HepG2 (cell line): ENCODE measurements at regions of chr16 and their contacts with region 1.

Region 1: GRCh38 chr16:4371357-4372000 is at the start of gene VASN:
- DNase-seq: peak; percentile 59
- ATAC-seq: peak; percentile 34
- H3K4me3 ChIP-seq: peak within 1 kb of the TSS; percentile 76 to 92 (median 82)
- H3K27ac ChIP-seq: peak within 1 kb of the TSS; percentile 83
- H3K4me1 ChIP-seq: peaks cover 88% of the 10 kb centered on the region
- H3K27me3 ChIP-seq: no peaks in the 10 kb centered on the region
- CTCF ChIP-seq: no peak
- EP300 ChIP-seq: 0 out of 4 replicates have a peak, but pooled peaks of 1 of the 2 experiments have one; percentile 28
- POLR2A ChIP-seq: peak; percentile 97 to 99
- RAD21 ChIP-seq: peak; percentile 15; the same call in 1 of the 2 replicates
- total RNA-seq, gene VASN: 6.9 and 18.2 TPM in 2 replicates

Region 2: GRCh38 chr16:4330277-4330874 is 41.1 kb before region 1 on chr16:
- CTCF ChIA-PET with region 1: no interaction called
- POLR2A ChIA-PET with region 1: no interaction called
- in situ Hi-C with region 1: no loop called
- intact Hi-C with region 1: no loop called
- DNase-seq: peak; percentile 51
- ATAC-seq: peak; percentile 67
- H3K4me3 ChIP-seq: no peak overlapping the region
- H3K27ac ChIP-seq: no peak overlapping the region
- H3K4me1 ChIP-seq: peaks cover 31% of the 10 kb centered on the region
- H3K27me3 ChIP-seq: no peaks in the 10 kb centered on the region
- CTCF ChIP-seq: peak; percentile 94
- EP300 ChIP-seq: no peak
- POLR2A ChIP-seq: no peak
- RAD21 ChIP-seq: peak; percentile 93

Region 3: GRCh38 chr16:4344983-4345835 is 26.3 kb before region 1 on chr16:
- CTCF ChIA-PET with region 1: no interaction called
- POLR2A ChIA-PET with region 1: interaction called, 36 read pairs
- in situ Hi-C with region 1: no loop called
- intact Hi-C with region 1: no loop called
- DNase-seq: peak; percentile 87
- ATAC-seq: peak; percentile 67
- H3K4me3 ChIP-seq: peak overlapping the region; percentile 39 to 74 (median 46)
- H3K27ac ChIP-seq: peak overlapping the region; percentile 88
- H3K4me1 ChIP-seq: peaks cover 57% of the 10 kb centered on the region
- H3K27me3 ChIP-seq: no peaks in the 10 kb centered on the region
- CTCF ChIP-seq: no peak
- EP300 ChIP-seq: no peak
- POLR2A ChIP-seq: peak in 1 of 2 experiments; percentile 62; a peak in 2 of 4 replicates
- RAD21 ChIP-seq: no peak

Region 4: DNA sequence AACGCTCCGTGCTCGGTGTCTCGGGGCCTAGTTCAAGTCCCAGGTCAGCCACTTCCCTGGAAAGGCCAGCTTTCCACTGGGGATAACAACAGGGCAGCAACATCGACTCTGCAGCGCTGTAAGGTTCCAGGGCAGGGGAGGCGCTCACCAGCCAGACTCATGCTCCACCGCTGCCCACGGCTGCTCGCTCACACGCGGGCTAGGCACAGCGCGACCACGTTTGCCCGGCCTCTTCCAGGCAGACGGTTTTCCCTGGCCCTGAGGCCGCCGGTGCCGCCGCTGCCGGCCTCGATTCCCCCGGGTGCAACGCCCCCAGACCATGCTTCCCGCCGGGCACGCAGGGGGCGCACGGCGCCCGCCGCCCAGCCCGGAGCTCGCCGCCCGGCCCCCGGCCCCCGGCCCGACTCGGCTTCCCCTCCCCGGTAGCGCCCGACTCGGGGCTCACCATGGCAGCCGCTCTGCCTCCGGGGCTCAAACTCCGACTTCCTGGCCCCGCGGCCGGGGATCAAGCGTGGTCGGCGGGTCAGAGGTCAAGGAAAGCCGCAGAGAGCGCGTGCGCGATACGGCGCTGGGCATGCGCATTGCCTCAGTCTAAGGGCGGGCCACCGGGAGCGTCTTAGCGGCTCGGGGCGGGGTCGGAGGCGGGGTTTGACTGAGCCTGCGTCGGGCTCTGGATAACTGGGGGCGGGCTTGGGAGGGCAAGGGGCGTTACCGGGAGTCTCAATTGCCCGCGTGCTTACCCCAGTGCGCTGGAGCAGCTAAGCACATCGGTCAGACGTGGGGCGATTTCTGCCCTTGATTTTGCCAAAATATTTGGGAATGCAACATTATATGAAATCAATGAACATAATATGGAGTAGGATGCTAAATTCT is 20.5 kb before region 1 on chr16 and contains the start of gene PAM16:
- CTCF ChIA-PET with region 1: no interaction called
- POLR2A ChIA-PET with region 1: interaction called, 36 read pairs
- in situ Hi-C with region 1: no loop called
- intact Hi-C with region 1: no loop called
- DNase-seq: peak; percentile 89
- ATAC-seq: peak; percentile 83
- H3K4me3 ChIP-seq: peak within 1 kb of the TSS; percentile 92 to 100 (median 100)
- H3K27ac ChIP-seq: peak within 1 kb of the TSS; percentile 89
- H3K4me1 ChIP-seq: peaks cover 66% of the 10 kb centered on the region
- H3K27me3 ChIP-seq: no peaks in the 10 kb centered on the region; a peak in 2 of 5 replicates
- CTCF ChIP-seq: no peak; the same call in 1 of the 2 replicates
- EP300 ChIP-seq: no peak
- POLR2A ChIP-seq: peak; percentile 66 to 84
- RAD21 ChIP-seq: peak; percentile 47; the same call in 1 of the 2 replicates
- total RNA-seq, gene PAM16: 39.5 and 51.8 TPM in 2 replicates

Region 5: DNA sequence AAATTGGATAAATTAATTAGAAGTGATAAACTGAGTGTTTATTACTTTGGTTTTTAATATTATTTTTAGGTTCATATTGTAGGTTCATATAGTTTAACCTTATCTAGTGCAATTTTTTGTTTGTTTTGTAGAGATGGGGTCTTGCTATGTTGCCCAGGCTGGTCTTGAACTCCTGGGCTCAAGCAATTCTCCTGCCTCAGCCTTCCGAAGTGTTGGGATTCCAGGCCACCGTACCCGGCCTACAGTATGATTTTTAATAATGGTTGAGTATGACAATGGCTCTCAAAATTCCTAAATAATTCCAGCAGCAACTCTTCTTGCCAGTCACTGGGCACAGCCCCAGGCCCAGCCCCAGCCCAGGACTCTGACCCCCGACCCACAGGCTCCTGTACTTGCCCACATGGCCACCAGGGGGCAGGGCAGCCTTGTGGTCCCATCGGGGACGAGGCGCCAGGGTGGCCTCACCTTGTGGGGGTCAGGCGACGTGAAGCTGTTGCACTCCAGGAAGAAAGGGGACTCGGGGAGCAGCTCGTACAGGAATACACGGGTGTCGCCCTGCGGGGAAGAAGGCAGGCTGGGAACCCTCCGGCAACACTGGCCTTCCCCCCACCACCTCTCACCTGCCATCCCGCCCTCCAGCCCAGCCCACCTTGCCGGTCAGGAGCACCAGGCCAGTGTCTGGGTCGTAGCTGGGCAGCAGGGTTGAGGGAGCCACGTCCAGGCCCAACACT is 12.5 kb before region 1 on chr16:
- CTCF ChIA-PET with region 1: no interaction called
- POLR2A ChIA-PET with region 1: interaction called, 10 read pairs
- in situ Hi-C with region 1: no loop called
- intact Hi-C with region 1: loop called (anchors 2 kb)
- DNase-seq: peak; percentile 53
- ATAC-seq: peak; percentile 80
- H3K4me3 ChIP-seq: no peak overlapping the region; a peak in 1 of 6 replicates
- H3K27ac ChIP-seq: no peak overlapping the region
- H3K4me1 ChIP-seq: peaks cover 17% of the 10 kb centered on the region
- H3K27me3 ChIP-seq: no peaks in the 10 kb centered on the region; a peak in 1 of 5 replicates
- CTCF ChIP-seq: peak; percentile 98
- EP300 ChIP-seq: no peak
- POLR2A ChIP-seq: no peak
- RAD21 ChIP-seq: peak; percentile 96

Region 6: DNA sequence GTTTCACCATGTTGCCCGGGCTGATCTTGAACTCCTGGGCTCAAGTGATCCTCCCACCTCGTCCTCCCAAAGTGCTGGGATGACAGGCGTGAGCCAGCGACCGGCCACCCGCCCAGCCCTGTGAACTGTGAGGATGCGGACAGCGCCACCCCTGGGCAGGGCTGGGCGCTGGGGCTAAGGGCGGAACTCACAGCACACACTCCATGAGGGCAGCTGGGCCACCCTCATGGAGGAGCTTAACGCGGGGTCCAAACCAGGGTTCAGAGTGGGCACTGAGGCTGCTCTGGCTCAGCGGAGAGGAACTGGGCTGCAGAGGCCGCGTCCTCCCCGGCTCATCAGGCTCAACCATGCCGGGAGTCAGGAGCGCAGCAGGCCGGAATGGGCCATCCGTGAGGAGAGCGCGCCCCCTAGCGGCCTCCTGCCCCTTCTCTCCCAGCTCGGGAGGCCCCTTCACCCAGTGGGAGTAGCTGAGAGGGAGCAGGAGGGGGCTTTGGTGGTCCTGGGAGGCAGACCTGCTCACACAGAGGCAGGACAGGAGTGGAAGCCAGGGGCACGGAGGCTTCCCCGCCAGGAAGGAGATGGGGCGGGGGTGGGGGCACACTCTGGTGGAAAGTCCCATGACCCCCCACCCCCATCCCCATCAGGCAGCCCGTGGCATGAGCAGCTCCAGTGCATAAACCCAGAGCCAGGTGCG is 31.1 kb after region 1 on chr16:
- CTCF ChIA-PET with region 1: interaction called, 3 read pairs
- POLR2A ChIA-PET with region 1: interaction called, 17 read pairs
- in situ Hi-C with region 1: no loop called
- intact Hi-C with region 1: no loop called
- DNase-seq: peak; percentile 45
- ATAC-seq: peak; percentile 90
- H3K4me3 ChIP-seq: peak overlapping the region in 2 of 3 experiments; percentile 30 to 62; a peak in 2 of 6 replicates
- H3K27ac ChIP-seq: no peak overlapping the region
- H3K4me1 ChIP-seq: peaks cover 23% of the 10 kb centered on the region
- H3K27me3 ChIP-seq: no peaks in the 10 kb centered on the region
- CTCF ChIP-seq: peak; percentile 98
- EP300 ChIP-seq: no peak
- POLR2A ChIP-seq: no peak
- RAD21 ChIP-seq: peak; percentile 99

Region 7: GRCh38 chr16:5234295-5235050 is 863.0 kb after region 1 on chr16:
- CTCF ChIA-PET with region 1: no interaction called
- POLR2A ChIA-PET with region 1: no interaction called
- in situ Hi-C with region 1: no loop called
- intact Hi-C with region 1: no loop called
- DNase-seq: no peak
- ATAC-seq: no peak
- H3K4me3 ChIP-seq: no peak overlapping the region
- H3K27ac ChIP-seq: no peak overlapping the region
- H3K4me1 ChIP-seq: no peaks in the 10 kb centered on the region
- H3K27me3 ChIP-seq: peaks cover 1 to 11% of the 10 kb centered on the region in 2 experiments; a peak in 3 of 5 replicates
- CTCF ChIP-seq: 0 out of 2 replicates have a peak, but pooled peaks have one; percentile 6
- EP300 ChIP-seq: no peak
- POLR2A ChIP-seq: no peak
- RAD21 ChIP-seq: no peak